MCF 10A (cell line): ENCODE measurements at regions of chr1 and their contacts with region 1.

Region 1: GRCh38 chr1:113021430-113022086 is 51.4 kb upstream of the LRIG2 start:
- DNase-seq: peak; percentile 86
- H3K4me3 Mint-ChIP-seq: peak overlapping the region; percentile 32
- H3K27ac Mint-ChIP-seq: peak overlapping the region; percentile 90
- H3K4me1 Mint-ChIP-seq: peaks cover 10% of the 10 kb centered on the region
- H3K27me3 Mint-ChIP-seq: no peaks in the 10 kb centered on the region
- CTCF ChIP-seq: no peak

Region 2: GRCh38 chr1:112998592-112999235 is 22.8 kb before region 1 on chr1:
- CTCF ChIA-PET with region 1: interaction called, 3 read pairs
- POLR2A ChIA-PET with region 1: interaction called, 17 read pairs
- intact Hi-C with region 1: no loop called
- DNase-seq: peak; percentile 89
- H3K4me3 Mint-ChIP-seq: no peak overlapping the region
- H3K27ac Mint-ChIP-seq: peak overlapping the region; percentile 51
- H3K4me1 Mint-ChIP-seq: peaks cover 29% of the 10 kb centered on the region
- H3K27me3 Mint-ChIP-seq: no peaks in the 10 kb centered on the region
- CTCF ChIP-seq: no peak

Region 3: DNA sequence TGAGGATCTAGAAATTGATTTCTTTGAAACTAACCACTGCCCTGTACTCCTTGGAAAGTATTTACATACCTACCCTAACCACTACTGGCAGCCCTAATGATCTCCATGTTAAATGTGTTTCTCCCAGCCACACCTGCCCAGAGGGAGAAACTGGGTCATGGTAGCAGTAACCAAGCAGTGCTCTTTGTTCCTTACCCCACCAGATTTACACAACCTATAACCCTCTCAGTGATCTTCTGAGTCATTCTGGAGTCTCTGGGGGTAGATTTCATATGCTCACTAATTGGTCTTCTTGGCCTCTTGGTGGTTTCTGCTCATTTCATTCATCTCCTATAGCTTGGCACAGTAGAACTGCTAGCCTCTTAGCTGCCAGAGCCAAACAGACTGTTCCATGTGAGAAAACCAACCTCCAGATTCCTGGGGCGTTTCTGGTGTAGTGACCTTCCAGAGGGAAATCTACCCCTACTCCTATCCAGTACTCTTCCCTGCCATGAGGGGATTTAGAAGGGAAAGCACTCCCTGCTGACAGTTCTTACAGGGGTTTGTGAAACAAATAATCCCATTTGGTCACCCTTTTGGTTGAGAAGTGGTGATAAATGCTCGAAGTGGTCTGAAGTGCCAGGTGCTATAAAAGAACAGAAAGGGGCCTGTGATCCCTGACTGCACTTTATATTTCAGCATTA is 15.2 kb after region 1 on chr1:
- CTCF ChIA-PET with region 1: interaction called, 10 read pairs
- POLR2A ChIA-PET with region 1: interaction called, 16 read pairs
- intact Hi-C with region 1: no loop called
- DNase-seq: peak; percentile 70
- H3K4me3 Mint-ChIP-seq: no peak overlapping the region
- H3K27ac Mint-ChIP-seq: peak overlapping the region; percentile 46
- H3K4me1 Mint-ChIP-seq: peaks cover 7% of the 10 kb centered on the region
- H3K27me3 Mint-ChIP-seq: no peaks in the 10 kb centered on the region
- CTCF ChIP-seq: no peak

Region 4: DNA sequence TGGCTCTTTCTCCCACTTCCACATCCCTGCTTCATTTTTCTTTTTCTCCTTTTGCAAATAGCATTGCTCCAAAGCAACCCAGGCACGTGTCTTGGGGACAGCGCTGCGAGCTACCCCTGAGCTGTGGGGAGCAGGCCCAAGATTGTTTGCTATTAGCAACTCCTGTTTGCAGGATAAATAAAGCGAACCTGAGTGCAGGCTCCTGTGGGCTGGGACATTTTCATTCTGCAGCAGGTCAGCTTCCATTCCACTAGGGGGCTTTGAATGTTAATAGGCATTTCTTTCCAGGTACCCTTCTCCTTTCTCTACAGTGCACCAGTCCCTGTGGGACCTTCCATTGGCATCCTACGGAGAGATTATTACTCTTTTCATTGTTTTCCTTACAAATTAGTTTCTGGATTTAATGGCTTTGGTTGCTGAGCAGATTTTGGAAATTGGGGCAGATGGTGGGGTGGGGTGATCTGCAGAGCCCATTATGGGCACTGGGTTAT is 1011.7 kb after region 1 on chr1:
- CTCF ChIA-PET with region 1: no interaction called
- POLR2A ChIA-PET with region 1: no interaction called
- intact Hi-C with region 1: no loop called
- DNase-seq: peak; percentile 27
- H3K4me3 Mint-ChIP-seq: no peak overlapping the region
- H3K27ac Mint-ChIP-seq: no peak overlapping the region
- H3K4me1 Mint-ChIP-seq: no peaks in the 10 kb centered on the region
- H3K27me3 Mint-ChIP-seq: no peaks in the 10 kb centered on the region
- CTCF ChIP-seq: peak; percentile 36